Stomach (tissue), 19 donors: ENCODE measurements at regions of chr7 and their contacts with region 1.

Region 1: GRCh38 chr7:89994483-89994882 is 159.8 kb upstream of the STEAP1 start:
- DNase-seq: no peak
- H3K4me3 ChIP-seq: no peak overlapping the region
- H3K27ac ChIP-seq: no peak overlapping the region
- H3K4me1 ChIP-seq: no peaks in the 10 kb centered on the region
- H3K27me3 ChIP-seq: no peaks in the 10 kb centered on the region
- CTCF ChIP-seq: no peak
- EP300 ChIP-seq: no peak
- POLR2A ChIP-seq: no peak

Region 2: GRCh38 chr7:89934101-89934500 is 60.4 kb before region 1 on chr7:
- intact Hi-C with region 1: loop called (anchors 10 kb)
- DNase-seq: peak in 1 of 2 donors; percentile 4
- H3K4me3 ChIP-seq: no peak overlapping the region
- H3K27ac ChIP-seq: no peak overlapping the region
- H3K4me1 ChIP-seq: no peaks in the 10 kb centered on the region
- H3K27me3 ChIP-seq: no peaks in the 10 kb centered on the region
- CTCF ChIP-seq: no peak
- EP300 ChIP-seq: no peak
- POLR2A ChIP-seq: no peak

Region 3: GRCh38 chr7:90033850-90034249 is 39.4 kb after region 1 on chr7:
- intact Hi-C with region 1: no loop called
- DNase-seq: no peak
- H3K4me3 ChIP-seq: no peak overlapping the region
- H3K27ac ChIP-seq: no peak overlapping the region
- H3K4me1 ChIP-seq: no peaks in the 10 kb centered on the region
- H3K27me3 ChIP-seq: no peaks in the 10 kb centered on the region
- CTCF ChIP-seq: no peak
- EP300 ChIP-seq: no peak
- POLR2A ChIP-seq: no peak

Region 4: DNA sequence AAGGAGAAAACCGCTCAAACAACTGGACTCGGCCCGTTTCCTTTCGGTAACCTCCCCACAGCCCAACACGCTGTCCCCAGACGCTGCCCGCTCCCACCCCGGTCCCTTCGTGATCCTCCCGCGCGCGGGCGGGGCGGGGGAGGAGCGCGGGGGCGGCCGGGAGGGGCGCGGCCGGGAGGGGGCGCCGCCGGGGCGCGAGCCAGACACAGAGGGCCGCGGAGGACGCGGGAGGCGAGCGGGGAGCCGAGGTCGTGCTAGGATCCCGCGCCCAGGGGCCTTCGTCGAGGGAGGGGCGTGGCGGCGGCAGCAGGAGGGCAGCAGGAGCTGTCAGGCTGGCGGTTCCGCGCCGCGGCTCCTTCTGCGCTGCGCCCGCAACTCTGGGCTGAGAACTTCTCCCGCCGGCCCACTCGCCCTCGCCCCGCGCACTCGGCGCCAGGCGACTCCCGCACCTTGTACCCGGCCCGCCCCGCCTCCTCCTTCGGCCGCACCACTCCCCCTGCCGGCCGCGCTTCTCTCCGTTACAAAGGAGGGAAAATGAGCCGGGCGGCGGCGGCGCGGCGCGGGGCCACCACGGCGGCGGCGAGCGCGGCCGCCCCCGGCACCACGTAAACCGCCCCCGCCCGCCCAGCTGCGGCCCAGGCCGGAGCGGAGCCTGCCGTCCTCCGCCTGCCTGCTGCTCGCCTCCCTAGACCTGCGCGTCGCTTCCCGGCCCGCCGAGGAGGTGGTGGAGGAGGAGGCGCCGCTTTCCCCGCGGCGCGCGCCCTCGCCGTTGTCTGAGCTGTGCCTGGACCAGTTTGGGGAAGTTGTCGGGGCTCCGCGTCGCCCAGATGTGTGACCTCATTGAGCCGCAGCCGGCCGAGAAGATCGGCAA is 601.6 kb after region 1 on chr7 and contains the start of gene CDK14:
- intact Hi-C with region 1: no loop called
- DNase-seq: peak; percentile 85 to 93
- H3K4me3 ChIP-seq: peak within 1 kb of the TSS; percentile 79 to 94 (median 84)
- H3K27ac ChIP-seq: peak within 1 kb of the TSS; percentile 81 to 92 (median 84)
- H3K4me1 ChIP-seq: peaks cover 0 to 46% (median 20%) of the 10 kb centered on the region in 4 donors
- H3K27me3 ChIP-seq: no peaks in the 10 kb centered on the region
- CTCF ChIP-seq: peak in 4 of 7 experiments; percentile 2 to 61 (median 13)
- EP300 ChIP-seq: no peak
- POLR2A ChIP-seq: no peak
- total RNA-seq, gene CDK14: 0.58 to 43.9 (median 12.8) TPM